Ascending aorta (tissue), 2 donors: ENCODE measurements at regions of chr22 and their contacts with region 1.

Region 1: GRCh38 chr22:19291580-19292457 is at the start of gene CLTCL1:
- DNase-seq: peak in 1 of 2 donors; percentile 82
- H3K4me3 ChIP-seq: peak within 1 kb of the TSS; percentile 87 to 94
- H3K27ac ChIP-seq: peak within 1 kb of the TSS; percentile 47 to 69
- H3K4me1 ChIP-seq: peaks cover 4 to 5% of the 10 kb centered on the region in 2 donors
- H3K27me3 ChIP-seq: no peaks in the 10 kb centered on the region
- CTCF ChIP-seq: no peak
- total RNA-seq, gene CLTCL1: 26.0 TPM

Region 2: DNA sequence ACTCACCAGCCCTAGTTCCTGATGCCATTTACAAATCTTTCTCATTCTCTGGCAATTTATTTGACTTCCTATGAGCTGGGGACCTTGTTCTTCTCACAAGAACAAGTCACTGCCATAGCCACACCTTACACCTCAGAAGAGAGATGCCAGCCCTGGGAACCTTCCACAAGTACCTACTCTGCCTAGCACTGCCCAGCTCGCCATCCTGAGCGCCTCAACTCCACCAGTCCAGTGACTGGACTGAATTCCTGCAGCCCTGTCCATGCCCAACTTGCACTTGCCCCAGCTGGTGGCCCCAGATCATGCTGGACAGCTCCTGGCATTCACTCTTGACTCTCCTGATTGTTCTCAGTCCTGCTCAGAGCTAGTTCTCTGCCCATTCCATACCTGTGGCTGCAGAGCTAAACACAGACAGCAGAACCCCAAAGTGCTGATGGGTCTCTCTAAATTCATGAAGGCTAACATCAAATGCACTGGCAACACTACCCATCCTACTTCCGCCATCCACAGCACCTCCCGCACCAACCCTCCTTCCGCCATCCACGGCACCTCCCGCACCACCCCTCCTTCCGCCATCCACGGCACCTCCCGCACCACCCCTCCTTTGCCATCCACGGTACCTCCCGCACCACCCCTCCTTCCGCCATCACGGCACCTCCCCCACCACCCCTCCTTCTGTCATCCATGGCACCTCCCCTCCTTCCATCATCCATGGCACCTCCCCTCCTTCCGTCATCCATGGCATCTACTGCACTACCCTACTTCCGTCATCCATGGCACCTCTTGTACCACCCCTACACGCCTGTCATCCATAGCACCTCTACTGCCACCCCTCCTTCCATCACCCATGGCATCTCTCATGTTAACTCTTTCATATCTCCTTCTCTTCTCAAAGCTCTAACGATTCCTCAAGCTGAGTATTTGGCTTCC is 89.7 kb before region 1 on chr22:
- intact Hi-C with region 1: no loop called
- DNase-seq: no peak
- H3K4me3 ChIP-seq: no peak overlapping the region
- H3K27ac ChIP-seq: no peak overlapping the region
- H3K4me1 ChIP-seq: no peaks in the 10 kb centered on the region
- H3K27me3 ChIP-seq: no peaks in the 10 kb centered on the region
- CTCF ChIP-seq: no peak

Region 3: GRCh38 chr22:19432133-19432851 is 140.5 kb after region 1 on chr22 and contains the start of gene MRPL40:
- intact Hi-C with region 1: loop called (anchors 2 kb)
- DNase-seq: peak; percentile 56 to 94
- H3K4me3 ChIP-seq: peak within 1 kb of the TSS; percentile 66 to 99
- H3K27ac ChIP-seq: peak within 1 kb of the TSS; percentile 95 to 98
- H3K4me1 ChIP-seq: peaks cover 0 to 22% of the 10 kb centered on the region in 2 donors
- H3K27me3 ChIP-seq: no peaks in the 10 kb centered on the region
- CTCF ChIP-seq: no peak
- total RNA-seq, gene MRPL40: 14.7 TPM

Region 4: GRCh38 chr22:19447388-19448075 is 155.7 kb after region 1 on chr22 and contains the start of gene C22orf39:
- intact Hi-C with region 1: loop called (anchors 1 kb)
- DNase-seq: peak; percentile 75 to 93
- H3K4me3 ChIP-seq: peak within 1 kb of the TSS; percentile 80 to 91
- H3K27ac ChIP-seq: peak within 1 kb of the TSS; percentile 86 to 89
- H3K4me1 ChIP-seq: peaks cover 3 to 18% of the 10 kb centered on the region in 2 donors
- H3K27me3 ChIP-seq: no peaks in the 10 kb centered on the region
- CTCF ChIP-seq: no peak
- total RNA-seq, gene C22orf39: 58.5 TPM

Region 5: GRCh38 chr22:19479357-19480172 is 187.7 kb after region 1 on chr22 and contains the start of gene CDC45:
- intact Hi-C with region 1: loop called (anchors 1 kb)
- DNase-seq: peak; percentile 90 to 98
- H3K4me3 ChIP-seq: peak within 1 kb of the TSS; percentile 84 to 85
- H3K27ac ChIP-seq: peak within 1 kb of the TSS; percentile 87 to 98
- H3K4me1 ChIP-seq: peaks cover 3 to 11% of the 10 kb centered on the region in 2 donors
- H3K27me3 ChIP-seq: no peaks in the 10 kb centered on the region
- CTCF ChIP-seq: no peak
- total RNA-seq, gene CDC45: not detected

Region 6: DNA sequence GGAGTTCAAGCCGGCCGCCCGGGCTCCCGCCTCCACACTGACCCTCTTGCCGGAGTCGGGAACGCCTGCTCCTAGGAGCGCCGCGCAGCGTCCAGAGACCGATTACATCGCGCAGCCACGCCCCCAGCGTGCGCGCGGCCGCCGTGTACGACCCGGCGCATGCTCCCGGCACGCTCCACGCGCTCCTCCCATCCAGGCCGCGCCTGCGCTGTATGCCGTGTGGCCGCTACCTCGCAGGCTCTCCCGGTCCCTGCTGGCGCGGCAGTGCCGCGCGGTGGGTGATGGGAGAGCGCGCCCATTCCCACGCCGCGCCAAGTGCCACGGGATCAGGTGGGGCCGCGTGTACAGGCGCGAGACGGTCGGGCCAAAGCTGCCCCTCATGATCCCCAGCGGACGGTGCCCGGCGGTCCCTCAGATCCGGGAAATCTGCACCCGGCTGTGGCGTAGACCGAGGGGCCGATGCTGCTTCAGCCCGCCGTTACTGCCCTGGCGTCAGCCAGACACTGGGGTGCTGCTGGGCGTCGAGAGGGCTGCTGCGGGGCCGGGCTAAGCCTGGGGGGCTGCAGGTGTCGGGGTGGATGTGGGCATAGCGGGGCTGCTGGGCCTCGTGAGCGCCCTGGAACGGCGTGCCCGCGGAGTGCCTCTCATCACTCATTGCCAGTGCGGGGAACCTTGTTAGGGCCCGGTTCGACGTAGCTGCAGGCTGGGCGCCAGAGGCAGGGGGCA is 563.1 kb after region 1 on chr22 and contains the starts of genes GNB1L and RTL10:
- intact Hi-C with region 1: loop called (anchors 10 kb)
- DNase-seq: peak; percentile 82 to 98
- H3K4me3 ChIP-seq: peak within 1 kb of the TSS; percentile 72 to 73
- H3K27ac ChIP-seq: peak within 1 kb of the TSS; percentile 91 to 94
- H3K4me1 ChIP-seq: peaks cover 14% of the 10 kb centered on the region in 2 donors
- H3K27me3 ChIP-seq: no peaks in the 10 kb centered on the region
- CTCF ChIP-seq: peak in 2 of 3 experiments; percentile 13 to 20
- total RNA-seq, gene GNB1L: 7.9 TPM
- total RNA-seq, gene RTL10: 8.8 TPM